IMR-90 (cell line): ENCODE measurements at regions of chr6 and their contacts with region 1.

Region 1: GRCh38 chr6:43386492-43386891 is 17.0 kb upstream of the ZNF318 start:
- DNase-seq: peak; percentile 25
- ATAC-seq: peak; percentile 76
- H3K4me3 ChIP-seq: no peak overlapping the region
- H3K27ac ChIP-seq: no peak overlapping the region
- H3K4me1 ChIP-seq: peaks cover 2% of the 10 kb centered on the region
- H3K27me3 ChIP-seq: peaks cover 18% of the 10 kb centered on the region
- CTCF ChIP-seq: peak; percentile 60
- POLR2A ChIP-seq: no peak
- RAD21 ChIP-seq: peak; percentile 46

Region 2: DNA sequence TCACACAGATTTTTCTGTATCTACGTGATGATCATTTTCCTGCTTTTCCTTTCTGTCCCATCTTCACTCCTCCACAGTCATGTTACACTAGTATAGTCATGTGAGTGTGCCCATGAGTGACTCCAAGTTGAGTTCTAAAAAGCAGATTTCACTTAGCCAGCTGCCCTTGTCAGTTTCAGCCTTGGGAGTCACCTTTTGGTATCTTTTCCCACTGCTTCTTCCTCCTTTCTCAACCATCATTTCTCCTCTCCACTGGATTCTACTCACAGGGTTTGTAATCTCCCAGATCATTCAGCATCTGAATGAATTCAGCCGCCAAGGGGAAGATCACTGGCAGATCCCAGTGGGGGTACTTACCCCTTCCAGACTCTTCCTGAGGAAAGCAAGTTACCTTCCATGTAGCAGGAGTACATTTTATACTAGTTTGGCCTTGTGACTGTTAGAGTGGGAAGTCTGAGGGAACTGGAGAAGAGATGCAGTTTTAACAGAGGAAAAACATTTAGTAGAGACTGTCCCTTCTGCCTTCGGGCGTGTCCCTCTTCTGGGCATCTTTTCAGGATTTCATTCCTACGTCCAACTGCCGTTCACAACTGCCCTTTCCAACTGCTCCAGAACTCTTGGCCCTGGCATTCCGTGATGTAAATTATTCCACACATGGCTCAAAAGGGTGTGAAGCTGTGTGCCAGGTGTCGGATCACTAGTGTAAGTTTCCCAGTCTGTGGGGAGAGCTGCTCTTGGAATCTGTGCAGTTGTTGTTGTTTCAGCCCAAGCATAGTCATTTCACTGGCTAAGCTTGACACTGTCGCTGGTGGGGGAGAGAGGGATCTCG is 565.8 kb before region 1 on chr6:
- CTCF ChIA-PET with region 1: no interaction called
- POLR2A ChIA-PET with region 1: no interaction called
- dilution Hi-C with region 1: no loop called
- in situ Hi-C with region 1: no loop called
- intact Hi-C with region 1: no loop called
- DNase-seq: no peak
- ATAC-seq: peak; percentile 35
- H3K4me3 ChIP-seq: no peak overlapping the region
- H3K27ac ChIP-seq: no peak overlapping the region
- H3K4me1 ChIP-seq: no peaks in the 10 kb centered on the region; the same call in 1 of the 2 replicates
- H3K27me3 ChIP-seq: no peaks in the 10 kb centered on the region
- CTCF ChIP-seq: no peak
- POLR2A ChIP-seq: no peak
- RAD21 ChIP-seq: no peak

Region 3: DNA sequence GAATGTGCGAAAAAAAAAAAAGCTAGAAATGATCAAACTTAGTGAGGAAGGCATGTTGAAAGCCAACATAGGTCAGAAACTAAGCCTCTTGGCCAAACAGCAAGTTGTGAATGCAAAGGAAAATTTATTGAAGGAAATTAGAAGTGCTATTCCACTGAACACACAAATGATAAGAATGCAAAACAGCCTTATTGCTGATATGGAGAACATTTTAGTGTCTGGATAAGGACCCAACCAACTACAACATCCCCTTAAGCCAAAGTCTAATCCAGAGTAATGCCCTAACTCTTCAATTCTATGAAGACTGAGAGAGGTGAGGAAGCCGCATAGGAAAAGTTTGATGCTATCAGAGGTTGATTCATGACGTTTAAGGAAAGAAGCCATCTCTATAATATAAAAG is 35.3 kb after region 1 on chr6:
- CTCF ChIA-PET with region 1: no interaction called
- POLR2A ChIA-PET with region 1: no interaction called
- dilution Hi-C with region 1: no loop called
- in situ Hi-C with region 1: no loop called
- intact Hi-C with region 1: loop called (anchors 5 kb)
- DNase-seq: no peak
- ATAC-seq: no peak
- H3K4me3 ChIP-seq: no peak overlapping the region
- H3K27ac ChIP-seq: no peak overlapping the region
- H3K4me1 ChIP-seq: no peaks in the 10 kb centered on the region
- H3K27me3 ChIP-seq: peaks cover 14% of the 10 kb centered on the region
- CTCF ChIP-seq: no peak
- POLR2A ChIP-seq: no peak
- RAD21 ChIP-seq: no peak